Sigmoid colon (tissue), 7 donors: ENCODE measurements at regions of chr10 and their contacts with region 1.

Region 1: GRCh38 chr10:30114871-30115625 is 55.7 kb upstream of the JCAD start:
- DNase-seq: peak; percentile 79
- H3K4me3 ChIP-seq: peak overlapping the region in 3 of 4 donors; percentile 30 to 40 (median 39)
- H3K27ac ChIP-seq: peak overlapping the region in 3 of 4 donors; percentile 77 to 82 (median 82)
- H3K4me1 ChIP-seq: peaks cover 0 to 40% (median 20%) of the 10 kb centered on the region in 4 donors
- H3K27me3 ChIP-seq: no peaks in the 10 kb centered on the region
- CTCF ChIP-seq: no peak
- EP300 ChIP-seq: no peak
- POLR2A ChIP-seq: no peak

Region 2: GRCh38 chr10:29540016-29540415 is 575.0 kb before region 1 on chr10:
- intact Hi-C with region 1: no loop called
- DNase-seq: no peak
- H3K4me3 ChIP-seq: no peak overlapping the region
- H3K27ac ChIP-seq: peak overlapping the region in 3 of 4 donors; percentile 29 to 79 (median 73)
- H3K4me1 ChIP-seq: peaks cover 0 to 100% (median 95%) of the 10 kb centered on the region in 4 donors
- H3K27me3 ChIP-seq: no peaks in the 10 kb centered on the region
- CTCF ChIP-seq: no peak
- EP300 ChIP-seq: no peak
- POLR2A ChIP-seq: no peak

Region 3: GRCh38 chr10:29957907-29958356 is 157.1 kb before region 1 on chr10:
- intact Hi-C with region 1: no loop called
- DNase-seq: no peak
- H3K4me3 ChIP-seq: no peak overlapping the region
- H3K27ac ChIP-seq: peak overlapping the region in 1 of 4 donors; percentile 74
- H3K4me1 ChIP-seq: no peaks in the 10 kb centered on the region
- H3K27me3 ChIP-seq: no peaks in the 10 kb centered on the region
- CTCF ChIP-seq: no peak
- EP300 ChIP-seq: no peak
- POLR2A ChIP-seq: no peak

Region 4: DNA sequence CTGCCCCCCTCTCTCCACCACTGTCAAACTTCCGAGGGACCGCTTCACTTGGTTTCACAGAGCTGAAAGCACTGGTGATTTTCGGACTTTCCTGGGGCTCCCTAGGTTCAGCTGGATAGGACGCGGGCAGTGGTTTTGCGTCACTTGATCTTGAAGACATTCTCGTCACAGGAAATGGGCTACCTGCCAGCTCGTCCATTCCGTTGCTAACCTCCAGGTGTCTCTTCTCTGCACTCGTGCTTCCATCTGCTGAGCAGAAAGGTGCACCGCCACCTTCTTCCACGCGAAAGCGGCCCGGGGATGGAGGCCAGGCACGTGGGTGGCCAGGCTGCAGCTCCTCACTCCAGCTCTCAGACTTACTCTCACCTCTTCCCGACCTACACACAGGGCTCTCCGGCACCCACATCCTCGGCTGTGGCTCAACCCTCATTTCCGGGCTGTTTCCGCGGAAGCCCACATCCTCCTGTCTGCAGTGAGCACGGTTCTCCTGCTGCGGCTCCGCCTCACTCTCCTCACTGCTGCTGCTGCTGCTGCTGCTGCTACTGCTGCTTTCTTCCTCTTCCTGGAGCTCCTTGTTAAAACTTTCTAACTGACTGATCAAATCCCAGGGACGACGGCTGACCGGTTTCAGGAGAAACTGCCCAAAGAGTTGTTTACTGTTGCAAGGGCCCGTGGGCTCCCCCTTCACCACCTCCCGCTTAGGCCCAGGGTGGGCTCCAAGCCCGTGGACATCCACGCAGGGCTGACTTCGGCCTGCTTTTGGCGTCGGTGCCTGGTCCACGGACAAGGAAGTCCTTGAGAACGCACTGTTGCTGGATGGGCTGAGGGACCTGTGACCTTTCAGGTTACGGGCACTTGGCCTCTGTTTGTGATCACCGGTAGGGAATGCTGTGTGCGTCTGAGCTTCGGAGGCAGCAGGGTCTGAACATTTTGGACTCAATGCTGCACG is 87.7 kb before region 1 on chr10:
- intact Hi-C with region 1: loop called (anchors 2 kb)
- DNase-seq: peak; percentile 89
- H3K4me3 ChIP-seq: no peak overlapping the region
- H3K27ac ChIP-seq: peak overlapping the region; percentile 57 to 85 (median 80)
- H3K4me1 ChIP-seq: peaks cover 0 to 50% (median 44%) of the 10 kb centered on the region in 4 donors
- H3K27me3 ChIP-seq: no peaks in the 10 kb centered on the region
- CTCF ChIP-seq: no peak
- EP300 ChIP-seq: no peak
- POLR2A ChIP-seq: no peak

Region 5: GRCh38 chr10:30186371-30186875 is 71.4 kb after region 1 on chr10:
- intact Hi-C with region 1: loop called (anchors 5 kb)
- DNase-seq: no peak
- H3K4me3 ChIP-seq: peak overlapping the region in 2 of 4 donors; percentile 1 to 19
- H3K27ac ChIP-seq: peak overlapping the region; percentile 51 to 65 (median 60)
- H3K4me1 ChIP-seq: peaks cover 0 to 82% (median 70%) of the 10 kb centered on the region in 4 donors
- H3K27me3 ChIP-seq: no peaks in the 10 kb centered on the region
- CTCF ChIP-seq: no peak
- EP300 ChIP-seq: no peak
- POLR2A ChIP-seq: no peak